PC-9 (cell line): ENCODE measurements at regions of chr3 and their contacts with region 1.

Region 1: GRCh38 chr3:132164469-132165092 is 129.8 kb upstream of the CPNE4 start:
- DNase-seq: peak; percentile 58 to 94
- H3K4me3 ChIP-seq: no peak overlapping the region
- H3K27ac ChIP-seq: peak overlapping the region; percentile 92
- H3K4me1 ChIP-seq: peaks cover 30% of the 10 kb centered on the region
- H3K27me3 ChIP-seq: no peaks in the 10 kb centered on the region
- CTCF ChIP-seq: no peak

Region 2: GRCh38 chr3:131728898-131729611 is 435.5 kb before region 1 on chr3:
- CTCF ChIA-PET with region 1: interaction called, 11 read pairs
- POLR2A ChIA-PET with region 1: no interaction called
- intact Hi-C with region 1: no loop called
- DNase-seq: peak in 1 of 2 experiments; percentile 64
- H3K4me3 ChIP-seq: no peak overlapping the region
- H3K27ac ChIP-seq: peak overlapping the region; percentile 38; the same call in 1 of the 2 replicates
- H3K4me1 ChIP-seq: peaks cover 16% of the 10 kb centered on the region
- H3K27me3 ChIP-seq: no peaks in the 10 kb centered on the region
- CTCF ChIP-seq: no peak

Region 3: GRCh38 chr3:131812421-131812820 is 352.2 kb before region 1 on chr3:
- CTCF ChIA-PET with region 1: no interaction called
- POLR2A ChIA-PET with region 1: no interaction called
- intact Hi-C with region 1: no loop called
- DNase-seq: peak in 1 of 2 experiments; percentile 66
- H3K4me3 ChIP-seq: no peak overlapping the region
- H3K27ac ChIP-seq: no peak overlapping the region
- H3K4me1 ChIP-seq: peaks cover 11% of the 10 kb centered on the region
- H3K27me3 ChIP-seq: no peaks in the 10 kb centered on the region
- CTCF ChIP-seq: no peak

Region 4: GRCh38 chr3:132135628-132136333 is 28.8 kb before region 1 on chr3:
- CTCF ChIA-PET with region 1: interaction called, 3 read pairs
- POLR2A ChIA-PET with region 1: interaction called, 9 read pairs
- intact Hi-C with region 1: loop called (anchors 1 kb)
- DNase-seq: peak; percentile 71 to 97
- H3K4me3 ChIP-seq: peak overlapping the region; percentile 52
- H3K27ac ChIP-seq: peak overlapping the region; percentile 100
- H3K4me1 ChIP-seq: peaks cover 50% of the 10 kb centered on the region
- H3K27me3 ChIP-seq: no peaks in the 10 kb centered on the region
- CTCF ChIP-seq: no peak